Mammary epithelial cell (primary cell): ENCODE measurements at regions of chr12 and their contacts with region 1.

Region 1: DNA sequence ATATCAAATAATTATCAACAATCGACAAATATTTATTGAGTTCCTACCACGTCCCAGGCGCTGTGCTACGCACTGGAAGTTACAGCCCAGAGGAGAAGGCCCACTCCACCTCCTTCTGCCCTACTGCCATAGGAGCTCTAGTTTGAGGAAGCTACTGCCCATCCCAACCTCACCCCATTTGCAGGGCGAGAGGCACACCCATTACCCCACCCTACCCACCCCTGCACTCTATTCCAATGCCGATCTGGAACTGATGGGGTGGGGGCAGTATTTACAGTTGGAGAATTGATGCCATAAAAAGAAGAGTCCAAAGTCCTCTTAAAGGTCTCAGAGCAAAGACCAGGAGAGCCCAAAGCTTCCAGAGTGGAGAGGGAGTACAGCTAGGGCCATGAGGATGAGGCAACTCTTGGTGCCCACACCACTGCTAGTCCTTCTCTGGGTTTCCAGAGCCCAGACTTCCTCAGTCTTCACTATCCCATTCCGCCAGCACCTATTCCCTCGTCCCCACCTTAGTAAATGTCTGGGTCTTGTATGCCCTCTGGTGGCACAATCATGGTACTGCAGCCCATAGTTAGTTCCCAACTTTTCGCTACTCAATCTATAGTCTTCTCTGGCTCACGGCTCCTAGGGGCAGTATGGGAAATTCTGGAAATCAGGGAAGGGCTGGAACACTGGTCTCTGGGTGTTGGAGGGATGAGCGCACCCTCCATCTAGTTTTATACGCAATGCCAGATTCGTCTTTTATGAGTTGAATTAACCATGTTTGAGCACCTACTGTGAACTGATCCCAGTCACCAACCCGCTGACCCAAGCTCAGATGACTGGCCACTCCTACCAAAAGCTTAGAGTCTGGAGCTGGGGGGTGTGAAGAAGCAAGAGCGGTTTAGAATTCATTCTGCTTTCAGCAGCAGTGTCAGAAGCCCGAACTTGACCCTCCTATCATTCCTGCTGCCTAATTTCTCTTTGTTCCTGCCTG is 6.9 kb upstream of the ADCY6 start:
- DNase-seq: peak; percentile 69
- H3K4me3 ChIP-seq: no peak overlapping the region
- H3K27ac ChIP-seq: no peak overlapping the region
- H3K4me1 ChIP-seq: peaks cover 11% of the 10 kb centered on the region
- H3K27me3 ChIP-seq: no peaks in the 10 kb centered on the region
- CTCF ChIP-seq: peak; percentile 97

Region 2: GRCh38 chr12:48618541-48618940 is 177.2 kb before region 1 on chr12:
- CTCF ChIA-PET with region 1: interaction called, 5 read pairs
- dilution Hi-C with region 1: no loop called
- in situ Hi-C with region 1: no loop called
- intact Hi-C with region 1: loop called (anchors 1 kb)
- DNase-seq: peak; percentile 60
- H3K4me3 ChIP-seq: no peak overlapping the region
- H3K27ac ChIP-seq: no peak overlapping the region
- H3K4me1 ChIP-seq: no peaks in the 10 kb centered on the region
- H3K27me3 ChIP-seq: no peaks in the 10 kb centered on the region
- CTCF ChIP-seq: peak; percentile 99 to 100

Region 3: GRCh38 chr12:48750769-48751735 is 44.7 kb before region 1 on chr12:
- CTCF ChIA-PET with region 1: interaction called, 35 read pairs
- dilution Hi-C with region 1: loop called (anchors 5 kb)
- in situ Hi-C with region 1: loop called (anchors 5 kb)
- intact Hi-C with region 1: loop called (anchors 1 kb)
- DNase-seq: peak; percentile 56
- H3K4me3 ChIP-seq: no peak overlapping the region
- H3K27ac ChIP-seq: no peak overlapping the region
- H3K4me1 ChIP-seq: no peaks in the 10 kb centered on the region
- H3K27me3 ChIP-seq: no peaks in the 10 kb centered on the region
- CTCF ChIP-seq: no peak

Region 4: GRCh38 chr12:48814262-48815125 is 18.7 kb after region 1 on chr12:
- CTCF ChIA-PET with region 1: no interaction called
- dilution Hi-C with region 1: no loop called
- in situ Hi-C with region 1: no loop called
- intact Hi-C with region 1: loop called (anchors 2 kb)
- DNase-seq: peak; percentile 73
- H3K4me3 ChIP-seq: peak overlapping the region; percentile 77 to 92 (median 92)
- H3K27ac ChIP-seq: peak overlapping the region; percentile 16
- H3K4me1 ChIP-seq: peaks cover 28% of the 10 kb centered on the region
- H3K27me3 ChIP-seq: no peaks in the 10 kb centered on the region
- CTCF ChIP-seq: peak; percentile 95 to 98